ENCODE measurements at regions of chr18 and their contacts with region 1.

Region 1: DNA sequence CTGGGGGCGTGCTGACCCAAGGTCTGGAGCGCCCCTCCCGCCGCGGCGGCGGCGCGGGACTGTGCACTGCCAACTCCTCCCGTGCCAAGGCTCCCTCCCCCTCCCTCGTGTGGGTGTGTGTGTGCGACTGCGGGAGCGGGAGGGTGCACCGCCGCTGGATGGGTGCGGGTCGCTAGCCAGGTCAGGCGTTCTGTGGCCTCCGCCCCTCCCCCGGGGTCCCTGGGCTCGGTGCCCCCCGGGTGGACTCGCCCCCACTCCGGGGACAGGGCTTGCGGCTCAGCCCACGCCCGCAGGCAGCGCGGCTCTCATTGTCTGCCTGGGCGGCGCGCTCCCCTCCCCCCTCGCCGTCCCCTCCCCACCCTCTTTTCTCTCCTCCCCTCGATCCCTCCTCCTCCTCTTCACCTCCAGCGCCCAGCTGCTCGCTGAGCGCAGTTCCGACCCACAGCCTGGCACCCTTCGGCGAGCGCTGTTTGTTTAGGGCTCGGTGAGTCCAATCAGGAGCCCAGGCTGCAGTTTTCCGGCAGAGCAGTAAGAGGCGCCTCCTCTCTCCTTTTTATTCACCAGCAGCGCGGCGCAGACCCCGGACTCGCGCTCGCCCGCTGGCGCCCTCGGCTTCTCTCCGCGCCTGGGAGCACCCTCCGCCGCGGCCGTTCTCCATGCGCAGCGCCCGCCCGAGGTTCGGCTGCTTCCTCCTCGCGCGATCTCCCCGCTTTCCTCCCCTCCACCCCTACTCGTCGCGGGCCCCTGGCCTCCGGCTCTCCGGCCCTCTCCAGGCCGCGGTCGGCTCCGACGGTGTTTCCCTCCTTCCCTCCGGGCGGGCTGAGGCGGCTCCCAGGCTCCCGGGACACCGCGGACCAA is at the start of gene GATA6:
- DNase-seq: peak; percentile 94
- H3K4me3 Mint-ChIP-seq: peak within 1 kb of the TSS; percentile 98
- H3K27ac Mint-ChIP-seq: peak within 1 kb of the TSS; percentile 94
- H3K4me1 Mint-ChIP-seq: peaks cover 8% of the 10 kb centered on the region
- H3K27me3 Mint-ChIP-seq: peaks cover 23% of the 10 kb centered on the region
- CTCF ChIP-seq: no peak
- total RNA-seq, gene GATA6: 54.6 and 58.4 TPM in 2 replicates

Region 2: DNA sequence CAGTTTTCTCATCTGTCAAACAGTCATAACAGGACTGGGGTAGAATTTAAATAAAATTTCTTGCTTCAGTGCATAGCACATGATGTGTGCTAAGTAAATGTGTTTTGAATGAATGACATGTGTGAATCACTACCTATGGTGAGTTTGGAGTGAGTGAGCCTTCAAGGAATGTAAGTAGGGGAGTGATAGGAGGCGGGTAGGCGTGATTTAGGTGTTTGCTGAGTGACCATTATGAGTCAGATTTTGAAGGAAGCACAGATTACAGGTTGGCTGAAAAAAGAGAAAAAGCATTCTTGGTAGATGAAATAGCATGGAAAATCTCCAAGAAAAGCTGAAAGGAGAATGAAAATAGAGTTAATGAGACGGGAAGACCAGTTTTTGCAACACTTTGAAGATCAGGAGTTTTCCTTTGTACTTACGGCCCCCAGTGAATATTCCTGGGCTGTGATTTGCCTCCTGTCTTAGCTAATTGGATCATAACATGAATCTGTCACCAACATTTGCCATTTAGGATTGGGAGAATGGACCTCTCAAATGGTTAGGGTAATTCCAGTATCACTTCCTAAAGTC is 136.8 kb before region 1 on chr18:
- CTCF ChIA-PET with region 1: no interaction called
- intact Hi-C with region 1: loop called (anchors 5 kb)
- DNase-seq: peak; percentile 70
- H3K4me3 Mint-ChIP-seq: peak overlapping the region; percentile 35
- H3K27ac Mint-ChIP-seq: peak overlapping the region; percentile 93
- H3K4me1 Mint-ChIP-seq: peaks cover 23% of the 10 kb centered on the region
- H3K27me3 Mint-ChIP-seq: no peaks in the 10 kb centered on the region
- CTCF ChIP-seq: no peak

Region 3: DNA sequence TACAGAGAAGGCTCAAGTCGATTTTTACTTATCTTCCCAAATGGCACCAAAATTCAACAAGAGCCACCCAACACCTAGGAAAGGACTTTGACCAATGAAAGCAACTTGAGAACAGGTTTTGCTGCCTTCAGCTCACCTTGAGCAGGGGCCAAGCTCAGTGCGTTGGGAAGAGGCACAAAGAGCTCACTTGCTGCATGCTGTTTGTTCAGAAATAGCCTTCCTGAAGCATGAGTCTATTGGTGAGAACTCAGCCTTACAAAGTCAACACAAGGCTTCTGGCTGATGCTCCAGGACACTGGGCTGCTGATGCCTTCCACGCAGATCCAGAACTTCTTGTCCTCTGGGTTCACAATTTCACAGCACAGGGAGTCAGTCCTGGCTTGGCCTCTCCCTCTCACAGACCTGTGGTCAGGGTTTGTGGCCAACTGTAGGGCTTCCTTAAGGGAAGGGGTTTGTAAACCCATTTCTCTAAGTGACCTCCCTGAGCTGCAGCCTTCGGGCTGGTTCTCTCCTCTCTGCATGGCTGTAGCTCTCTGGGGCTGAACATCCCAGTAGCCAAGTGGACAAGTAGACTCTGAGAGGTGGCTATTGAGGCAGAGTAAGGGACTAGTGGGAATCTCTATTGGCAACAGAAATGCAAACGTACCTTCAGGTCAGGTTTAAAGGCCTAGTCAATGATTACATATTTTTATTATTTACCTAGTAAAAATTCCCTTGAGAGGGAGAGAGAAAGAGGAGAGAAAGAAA is 124.6 kb before region 1 on chr18:
- CTCF ChIA-PET with region 1: no interaction called
- intact Hi-C with region 1: loop called (anchors 5 kb)
- DNase-seq: peak; percentile 72
- H3K4me3 Mint-ChIP-seq: peak overlapping the region; percentile 55
- H3K27ac Mint-ChIP-seq: peak overlapping the region; percentile 67
- H3K4me1 Mint-ChIP-seq: peaks cover 70% of the 10 kb centered on the region
- H3K27me3 Mint-ChIP-seq: no peaks in the 10 kb centered on the region
- CTCF ChIP-seq: no peak

Region 4: GRCh38 chr18:22230471-22230945 is 61.3 kb after region 1 on chr18:
- CTCF ChIA-PET with region 1: no interaction called
- intact Hi-C with region 1: no loop called
- DNase-seq: no peak
- H3K4me3 Mint-ChIP-seq: no peak overlapping the region
- H3K27ac Mint-ChIP-seq: no peak overlapping the region
- H3K4me1 Mint-ChIP-seq: peaks cover 17% of the 10 kb centered on the region
- H3K27me3 Mint-ChIP-seq: no peaks in the 10 kb centered on the region
- CTCF ChIP-seq: no peak